Heart left ventricle (tissue), 16 donors: ENCODE measurements at regions of chr2 and their contacts with region 1.

Region 1: DNA sequence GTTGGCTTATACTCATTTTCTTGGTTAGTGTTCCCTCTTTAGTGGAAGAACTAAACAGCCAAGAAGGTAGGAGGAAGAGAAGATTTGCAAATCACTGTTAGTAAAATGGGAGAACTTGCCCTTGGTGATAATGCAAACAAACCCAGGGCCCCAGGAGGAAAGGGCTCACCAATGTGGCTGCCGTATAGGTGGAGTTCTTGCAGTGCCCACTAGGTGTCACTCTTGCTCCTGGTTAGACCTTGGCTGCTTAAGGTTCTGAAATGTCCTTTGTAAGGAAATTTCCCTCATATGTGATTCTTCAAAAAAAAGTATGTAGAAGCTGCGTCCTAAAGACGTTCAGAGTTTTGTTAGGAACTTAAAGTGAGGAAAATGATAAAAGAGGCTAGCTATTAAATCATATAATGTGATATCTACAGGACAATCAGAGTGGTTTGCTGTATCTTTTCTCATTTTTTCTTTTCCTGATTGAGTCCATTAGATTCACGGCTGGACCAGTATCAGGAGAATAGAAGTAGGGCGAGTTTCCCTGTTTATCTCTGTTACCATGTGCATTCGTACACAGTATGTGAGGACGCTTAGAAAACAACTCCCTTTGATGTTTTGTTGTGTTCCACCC is 48.6 kb downstream of the RPIA start:
- DNase-seq: peak in 4 of 5 donors; percentile 57 to 68 (median 61)
- ATAC-seq: peak in 3 of 4 donors; percentile 61 to 70 (median 63)
- H3K4me3 ChIP-seq: no peak overlapping the region
- H3K27ac ChIP-seq: peak overlapping the region in 7 of 12 donors; percentile 2 to 54 (median 45)
- H3K4me1 ChIP-seq: peaks cover 0 to 39% (median 27%) of the 10 kb centered on the region in 12 donors
- H3K27me3 ChIP-seq: no peaks in the 10 kb centered on the region
- CTCF ChIP-seq: peak; percentile 88 to 96 (median 94)
- POLR2A ChIP-seq: no peak

Region 2: DNA sequence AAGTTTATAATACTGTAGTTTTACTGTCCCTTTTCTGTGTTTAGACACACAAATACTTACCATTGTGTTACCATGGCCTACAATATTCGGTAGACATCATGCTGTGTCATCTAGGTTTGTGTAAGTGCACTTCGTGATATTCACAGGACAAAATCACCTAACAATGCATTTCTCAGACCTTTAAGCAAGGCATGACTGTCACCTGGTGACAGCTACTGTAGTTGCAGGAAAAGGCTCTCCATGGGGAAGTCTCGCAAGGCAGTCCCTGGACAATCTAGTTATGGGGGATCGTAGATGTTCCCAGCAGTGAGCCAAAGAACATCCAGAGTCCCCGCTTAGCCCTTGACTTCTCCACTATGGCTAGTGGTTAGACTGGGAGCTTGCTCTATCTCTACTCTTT is 185.9 kb before region 1 on chr2:
- intact Hi-C with region 1: no loop called
- DNase-seq: no peak
- ATAC-seq: no peak
- H3K4me3 ChIP-seq: no peak overlapping the region
- H3K27ac ChIP-seq: no peak overlapping the region
- H3K4me1 ChIP-seq: peaks cover 0 to 7% (median 0%) of the 10 kb centered on the region in 12 donors
- H3K27me3 ChIP-seq: peaks cover 0 to 12% (median 7%) of the 10 kb centered on the region in 9 donors
- CTCF ChIP-seq: peak in 1 of 12 donors; percentile 12
- POLR2A ChIP-seq: no peak

Region 3: DNA sequence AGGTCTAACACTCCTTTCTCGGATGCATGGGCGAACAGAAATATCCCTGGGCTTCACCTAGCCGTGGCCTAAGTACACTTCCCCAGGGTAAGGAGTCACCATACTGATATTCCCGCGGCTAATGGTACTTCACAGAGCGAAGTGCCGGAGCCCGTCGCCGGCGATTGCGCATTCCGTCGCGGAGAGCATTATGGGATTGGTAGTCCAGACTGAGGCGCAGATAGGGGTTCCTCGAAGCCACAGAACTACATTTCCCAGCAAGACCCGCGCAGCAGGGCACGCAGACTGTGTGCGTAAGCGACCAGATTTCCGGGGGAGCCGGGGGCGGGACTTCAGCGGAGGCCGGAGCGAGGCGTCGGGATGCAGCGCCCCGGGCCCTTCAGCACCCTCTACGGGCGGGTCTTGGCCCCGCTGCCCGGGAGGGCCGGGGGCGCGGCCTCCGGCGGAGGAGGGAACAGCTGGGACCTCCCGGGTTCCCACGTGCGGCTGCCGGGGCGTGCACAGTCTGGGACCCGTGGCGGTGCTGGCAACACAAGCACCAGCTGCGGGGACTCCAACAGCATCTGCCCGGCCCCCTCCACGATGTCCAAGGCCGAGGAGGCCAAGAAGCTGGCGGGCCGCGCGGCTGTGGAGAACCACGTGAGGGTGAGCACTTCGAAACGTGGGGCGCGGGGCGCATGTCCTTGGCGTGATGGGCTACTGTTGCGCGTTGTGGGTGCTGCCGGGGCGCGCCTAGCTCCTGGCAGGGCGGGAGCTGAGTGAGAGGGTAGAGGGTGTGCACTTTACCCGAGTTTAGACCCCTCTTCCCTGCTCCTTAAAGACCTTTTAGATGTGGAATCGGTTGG is 48.5 kb before region 1 on chr2 and contains the start of gene RPIA:
- intact Hi-C with region 1: loop called in 2 of 10 experiments (anchors 5 kb)
- DNase-seq: peak; percentile 99 to 100 (median 100)
- ATAC-seq: peak; percentile 99 to 100 (median 99)
- H3K4me3 ChIP-seq: peak within 1 kb of the TSS; percentile 45 to 98 (median 78)
- H3K27ac ChIP-seq: peak within 1 kb of the TSS; percentile 58 to 89 (median 82)
- H3K4me1 ChIP-seq: peaks cover 2 to 40% (median 21%) of the 10 kb centered on the region in 12 donors
- H3K27me3 ChIP-seq: no peaks in the 10 kb centered on the region
- CTCF ChIP-seq: peak; percentile 65 to 92 (median 78)
- POLR2A ChIP-seq: peak in 1 of 2 donors; percentile 65
- total RNA-seq, gene RPIA: 4.1 to 15.3 (median 12.6) TPM

Region 4: GRCh38 chr2:88831792-88832248 is 91.7 kb after region 1 on chr2:
- intact Hi-C with region 1: loop called in 2 of 10 experiments (anchors 5 kb)
- DNase-seq: peak in 3 of 5 donors; percentile 32 to 76 (median 49)
- ATAC-seq: peak in 2 of 4 donors; percentile 28 to 44
- H3K4me3 ChIP-seq: no peak overlapping the region
- H3K27ac ChIP-seq: no peak overlapping the region
- H3K4me1 ChIP-seq: peaks cover 0 to 14% (median 0%) of the 10 kb centered on the region in 12 donors
- H3K27me3 ChIP-seq: peaks cover 0 to 6% (median 0%) of the 10 kb centered on the region in 9 donors
- CTCF ChIP-seq: peak in 11 of 12 donors; percentile 47 to 72 (median 58)
- POLR2A ChIP-seq: no peak

Region 5: GRCh38 chr2:88865801-88866371 is 125.8 kb after region 1 on chr2:
- intact Hi-C with region 1: loop called in 5 of 10 experiments (anchors 5 to 10 kb)
- DNase-seq: no peak
- ATAC-seq: no peak
- H3K4me3 ChIP-seq: no peak overlapping the region
- H3K27ac ChIP-seq: no peak overlapping the region
- H3K4me1 ChIP-seq: peaks cover 0 to 6% (median 0%) of the 10 kb centered on the region in 12 donors
- H3K27me3 ChIP-seq: peaks cover 0 to 28% (median 3%) of the 10 kb centered on the region in 9 donors
- CTCF ChIP-seq: no peak
- POLR2A ChIP-seq: no peak

Region 6: GRCh38 chr2:88874063-88874657 is 134.1 kb after region 1 on chr2:
- intact Hi-C with region 1: loop called in 7 of 10 experiments (anchors 5 to 10 kb)
- DNase-seq: peak in 2 of 5 donors; percentile 14 to 27
- ATAC-seq: peak in 3 of 4 donors; percentile 56 to 76 (median 67)
- H3K4me3 ChIP-seq: no peak overlapping the region
- H3K27ac ChIP-seq: no peak overlapping the region
- H3K4me1 ChIP-seq: peaks cover 0 to 10% (median 0%) of the 10 kb centered on the region in 12 donors
- H3K27me3 ChIP-seq: peaks cover 0 to 16% (median 0%) of the 10 kb centered on the region in 9 donors
- CTCF ChIP-seq: peak; percentile 60 to 87 (median 78)
- POLR2A ChIP-seq: no peak

Region 7: DNA sequence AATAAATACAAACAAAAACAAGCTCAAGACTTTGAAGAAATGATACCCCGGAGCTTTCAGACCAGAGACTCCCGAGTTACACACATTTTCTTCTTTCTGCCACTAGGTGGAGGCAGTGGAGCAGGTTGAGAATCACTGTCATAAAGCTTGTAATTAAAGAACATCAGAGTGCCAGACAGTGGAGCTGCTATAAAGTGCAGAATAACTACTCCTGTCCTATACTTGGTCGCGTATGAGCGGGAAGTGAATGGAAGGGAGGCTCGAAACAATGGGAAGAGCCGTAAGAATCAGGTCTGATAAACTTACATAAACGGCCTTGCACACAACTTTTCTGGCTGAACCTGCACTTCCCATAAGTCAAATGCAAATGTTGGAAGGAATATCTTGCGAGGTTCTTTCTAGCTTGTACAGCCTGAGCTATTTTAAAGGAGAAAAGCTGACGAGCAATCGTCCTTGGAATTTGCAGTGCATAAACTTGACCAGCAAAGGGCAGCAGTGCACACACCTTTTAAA is 140.4 kb after region 1 on chr2:
- intact Hi-C with region 1: loop called in 5 of 10 experiments (anchors 5 to 10 kb)
- DNase-seq: peak in 2 of 5 donors; percentile 20 to 26
- ATAC-seq: peak in 3 of 4 donors; percentile 73 to 86 (median 76)
- H3K4me3 ChIP-seq: peak overlapping the region in 2 of 12 donors; percentile 5 to 14
- H3K27ac ChIP-seq: no peak overlapping the region
- H3K4me1 ChIP-seq: peaks cover 0 to 7% (median 0%) of the 10 kb centered on the region in 12 donors
- H3K27me3 ChIP-seq: peaks cover 0 to 6% (median 0%) of the 10 kb centered on the region in 9 donors
- CTCF ChIP-seq: peak; percentile 62 to 86 (median 76)
- POLR2A ChIP-seq: no peak

Region 8: GRCh38 chr2:88919087-88919738 is 179.1 kb after region 1 on chr2:
- intact Hi-C with region 1: loop called in 2 of 10 experiments (anchors 5 to 10 kb)
- DNase-seq: no peak
- ATAC-seq: no peak
- H3K4me3 ChIP-seq: no peak overlapping the region
- H3K27ac ChIP-seq: no peak overlapping the region
- H3K4me1 ChIP-seq: no peaks in the 10 kb centered on the region
- H3K27me3 ChIP-seq: peaks cover 0 to 1% (median 0%) of the 10 kb centered on the region in 9 donors
- CTCF ChIP-seq: peak; percentile 32 to 66 (median 48)
- POLR2A ChIP-seq: no peak